ENCODE measurements at regions of chr10 and their contacts with region 1.

Region 1: DNA sequence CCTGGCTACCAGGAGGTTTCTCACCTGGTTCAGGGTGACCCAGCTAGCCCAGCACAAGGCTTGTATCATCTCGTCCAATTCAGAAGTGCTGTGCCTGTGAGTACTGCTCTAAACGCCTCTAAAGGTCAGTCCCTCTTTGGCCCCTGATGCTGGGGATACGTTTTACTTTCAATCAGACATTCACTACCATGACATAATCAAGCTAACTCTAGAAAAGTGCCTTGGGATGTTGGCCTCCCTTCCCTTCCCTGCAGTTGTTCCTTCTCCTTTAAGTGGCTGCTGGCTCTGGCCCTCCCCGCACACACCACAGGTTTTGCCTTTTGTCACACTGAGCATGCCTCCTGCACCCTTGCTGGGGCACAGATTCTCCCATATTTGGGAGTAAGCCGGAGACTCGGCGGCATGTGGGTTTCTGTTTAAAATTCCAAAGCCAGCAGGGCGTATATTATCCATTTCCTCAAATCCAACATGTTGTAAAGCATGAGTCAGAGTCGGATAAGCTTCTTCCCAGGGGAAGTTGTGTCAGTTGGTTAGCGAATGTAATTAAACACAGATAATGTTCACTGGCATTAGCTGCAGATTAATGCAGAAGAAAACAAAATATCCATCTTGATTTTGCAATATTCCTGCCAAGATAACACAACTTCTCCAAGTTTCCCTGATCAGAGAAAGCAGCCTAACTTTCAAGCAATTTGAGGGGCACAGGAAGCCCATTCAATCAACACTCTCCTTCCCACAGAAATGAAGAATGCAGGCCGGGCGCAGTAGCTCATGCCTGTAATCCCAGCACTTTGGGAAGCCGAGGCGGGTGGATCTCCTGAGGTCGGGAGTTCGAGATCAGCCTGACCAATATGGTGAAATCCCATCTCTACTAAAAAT is 31.8 kb upstream of the VCL start:
- DNase-seq: peak; percentile 99
- H3K4me3 ChIP-seq: no peak overlapping the region
- CTCF ChIP-seq: no peak

Region 2: GRCh38 chr10:73865459-73866442 is 100.4 kb before region 1 on chr10:
- in situ Hi-C with region 1: no loop called
- DNase-seq: no peak
- H3K4me3 ChIP-seq: no peak overlapping the region
- CTCF ChIP-seq: no peak

Region 3: GRCh38 chr10:74011770-74012169 is 45.6 kb after region 1 on chr10:
- in situ Hi-C with region 1: loop called (anchors 5 kb)
- DNase-seq: peak; percentile 93
- H3K4me3 ChIP-seq: peak overlapping the region; percentile 5
- CTCF ChIP-seq: no peak

Measured in astrocyte of the cerebellum (primary cell).